ENCODE measurements at regions of chr12 and their contacts with region 1.

Region 1: DNA sequence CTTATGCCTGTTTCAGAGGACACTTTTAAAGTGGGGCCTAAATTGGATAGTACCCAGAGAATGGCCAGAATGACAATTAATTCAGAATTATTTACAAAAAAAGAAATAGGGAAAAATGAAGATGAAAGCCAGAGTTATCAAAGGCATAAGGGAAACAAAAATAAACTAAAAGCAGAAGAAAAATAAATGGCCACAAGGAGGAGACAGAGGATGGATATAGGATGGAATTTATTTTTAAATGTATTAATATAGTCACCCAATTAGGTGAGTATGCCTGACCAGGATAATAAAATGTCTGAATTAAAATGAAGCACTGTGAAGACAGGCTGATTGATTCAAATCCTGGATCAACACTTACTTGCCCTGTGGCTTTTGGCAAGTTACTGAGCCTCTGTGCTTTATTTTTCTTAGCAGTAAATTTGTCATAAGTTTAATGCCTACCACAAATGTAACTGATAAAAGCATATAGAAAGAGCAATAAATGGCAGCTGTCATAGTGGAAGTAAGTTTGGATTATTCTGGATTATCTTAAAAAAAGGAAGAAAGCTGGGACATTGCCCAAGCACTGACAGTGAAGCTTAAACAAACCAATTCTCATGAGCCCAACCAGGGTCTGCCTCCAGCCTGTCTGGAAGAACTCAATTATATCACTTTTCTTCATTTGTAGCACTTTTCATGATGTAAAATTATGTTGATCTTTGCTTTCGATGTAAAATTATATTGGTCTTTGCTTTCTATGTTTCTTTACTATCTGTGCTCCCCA is 3.5 kb downstream of the CLEC9A start:
- DNase-seq: no peak
- ATAC-seq: no peak
- H3K4me3 ChIP-seq: no peak overlapping the region
- H3K27ac ChIP-seq: no peak overlapping the region
- H3K4me1 ChIP-seq: no peaks in the 10 kb centered on the region
- H3K27me3 ChIP-seq: no peaks in the 10 kb centered on the region
- CTCF ChIP-seq: peak; percentile 56; the same call in 1 of the 2 replicates

Region 2: DNA sequence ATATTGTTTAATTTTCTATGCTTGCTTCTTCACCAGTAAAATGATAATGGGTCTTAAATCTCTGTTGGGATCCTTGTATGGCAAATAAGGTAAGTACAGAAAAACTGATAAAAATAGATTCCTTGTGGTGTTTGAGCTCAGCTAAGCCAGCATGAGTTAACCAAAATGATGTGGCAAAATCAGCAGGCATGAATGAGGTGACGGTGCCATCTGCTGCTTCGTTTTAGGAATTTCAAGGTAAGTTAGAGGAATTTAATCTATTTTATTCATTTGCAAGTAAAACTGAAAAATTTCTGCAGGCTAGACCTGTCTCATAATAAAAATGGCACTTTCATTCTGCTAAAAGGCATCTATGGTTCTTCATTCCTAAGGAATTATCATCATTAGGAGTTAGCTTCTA is 106.0 kb after region 1 on chr12:
- CTCF ChIA-PET with region 1: no interaction called
- POLR2A ChIA-PET with region 1: no interaction called
- in situ Hi-C with region 1: no loop called
- intact Hi-C with region 1: loop called (anchors 2 kb)
- DNase-seq: no peak
- ATAC-seq: no peak
- H3K4me3 ChIP-seq: no peak overlapping the region
- H3K27ac ChIP-seq: no peak overlapping the region
- H3K4me1 ChIP-seq: no peaks in the 10 kb centered on the region; the same call in 1 of the 2 replicates
- H3K27me3 ChIP-seq: no peaks in the 10 kb centered on the region
- CTCF ChIP-seq: peak; percentile 52; the same call in 1 of the 2 replicates